H1 (cell line): ENCODE measurements at regions of chr2 and their contacts with region 1.

Region 1: GRCh38 chr2:219352448-219353023 is 20.0 kb upstream of the RESP18 start:
- DNase-seq: peak; percentile 43 to 94
- H3K4me3 ChIP-seq: no peak overlapping the region
- H3K27ac ChIP-seq: no peak overlapping the region
- H3K4me1 ChIP-seq: peaks cover 0 to 3% (median 0%) of the 10 kb centered on the region in 4 experiments; a peak in 1 of 7 replicates
- H3K27me3 ChIP-seq: peaks cover 4 to 13% (median 8%) of the 10 kb centered on the region in 4 experiments
- CTCF ChIP-seq: peak; percentile 59 to 85 (median 81)
- EP300 ChIP-seq: no peak
- POLR2A ChIP-seq: no peak
- RAD21 ChIP-seq: peak; percentile 74 to 77

Region 2: DNA sequence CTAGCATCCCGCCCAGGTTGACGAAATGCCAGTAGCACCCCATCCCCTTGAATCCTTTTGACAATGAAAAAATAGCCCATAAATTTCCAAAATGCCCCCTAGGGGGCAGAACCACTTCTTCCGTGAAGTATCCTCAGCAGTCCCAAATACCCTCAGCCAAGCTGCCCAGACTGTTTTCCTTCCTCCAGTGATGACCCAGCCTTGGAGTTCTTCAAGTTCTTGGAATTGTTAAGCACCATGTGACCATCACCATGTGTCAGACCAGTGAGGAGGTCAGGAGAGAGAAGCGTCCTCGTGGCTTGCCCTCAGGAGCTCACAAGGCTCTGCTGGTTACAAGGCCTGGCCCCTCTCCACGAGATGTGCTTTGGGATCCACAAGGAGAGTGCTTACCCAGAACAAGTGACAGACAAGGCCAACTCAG is 181.3 kb before region 1 on chr2:
- CTCF ChIA-PET with region 1: interaction called, 12 read pairs
- POLR2A ChIA-PET with region 1: no interaction called
- DNase-seq: peak in 1 of 2 experiments; percentile 58
- H3K4me3 ChIP-seq: no peak overlapping the region
- H3K27ac ChIP-seq: no peak overlapping the region
- H3K4me1 ChIP-seq: peaks cover 0 to 7% (median 2%) of the 10 kb centered on the region in 4 experiments; a peak in 2 of 7 replicates
- H3K27me3 ChIP-seq: no peaks in the 10 kb centered on the region
- CTCF ChIP-seq: peak; percentile 19 to 62 (median 58)
- EP300 ChIP-seq: no peak
- POLR2A ChIP-seq: no peak
- RAD21 ChIP-seq: peak; percentile 47 to 57

Region 3: DNA sequence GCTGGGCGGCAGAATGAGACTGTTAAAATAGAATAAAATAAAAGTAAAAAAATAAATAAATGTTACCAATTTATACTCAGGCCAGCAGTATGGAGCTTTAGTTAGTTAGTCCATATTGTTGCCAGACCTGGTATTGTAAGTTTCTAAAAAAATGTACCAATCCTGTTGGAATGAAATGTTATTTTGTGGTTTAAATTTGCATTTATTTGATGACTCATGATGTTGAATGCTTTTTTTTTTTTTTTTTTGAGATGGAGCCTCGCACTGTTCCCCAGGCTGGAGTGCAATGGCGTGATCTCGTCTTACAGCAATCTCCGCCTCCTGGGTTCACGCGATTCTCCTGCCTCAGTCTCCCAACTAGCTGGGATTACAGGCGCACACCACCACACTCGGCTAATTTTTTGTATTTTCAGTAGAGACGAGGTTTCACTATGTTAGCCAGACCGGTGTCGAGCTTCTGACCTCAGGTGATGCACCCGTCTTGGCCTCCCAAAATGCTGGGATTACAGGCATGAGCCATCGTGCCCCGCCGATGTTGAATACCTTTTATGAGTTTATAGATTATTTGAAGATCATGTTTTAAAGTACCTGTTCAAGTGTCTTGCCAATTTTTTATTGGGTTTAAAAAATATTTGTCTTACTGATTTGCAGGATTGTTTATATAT is 37.6 kb before region 1 on chr2:
- CTCF ChIA-PET with region 1: interaction called, 17 read pairs
- POLR2A ChIA-PET with region 1: no interaction called
- DNase-seq: no peak
- H3K4me3 ChIP-seq: no peak overlapping the region
- H3K27ac ChIP-seq: no peak overlapping the region
- H3K4me1 ChIP-seq: peaks cover 0 to 4% (median 0%) of the 10 kb centered on the region in 4 experiments; a peak in 2 of 7 replicates
- H3K27me3 ChIP-seq: peaks cover 0 to 4% (median 0%) of the 10 kb centered on the region in 4 experiments; a peak in 2 of 7 replicates
- CTCF ChIP-seq: no peak
- EP300 ChIP-seq: no peak
- POLR2A ChIP-seq: no peak
- RAD21 ChIP-seq: no peak

Region 4: GRCh38 chr2:219331560-219332213 is 20.8 kb before region 1 on chr2:
- CTCF ChIA-PET with region 1: interaction called, 91 read pairs
- POLR2A ChIA-PET with region 1: no interaction called
- DNase-seq: peak in 1 of 2 experiments; percentile 90
- H3K4me3 ChIP-seq: peak overlapping the region in 1 of 4 experiments; percentile 33; a peak in 1 of 8 replicates
- H3K27ac ChIP-seq: no peak overlapping the region
- H3K4me1 ChIP-seq: peaks cover 0 to 3% (median 1%) of the 10 kb centered on the region in 4 experiments; a peak in 5 of 7 replicates
- H3K27me3 ChIP-seq: peaks cover 11 to 37% (median 24%) of the 10 kb centered on the region in 4 experiments
- CTCF ChIP-seq: no peak
- EP300 ChIP-seq: no peak
- POLR2A ChIP-seq: no peak
- RAD21 ChIP-seq: no peak

Region 5: DNA sequence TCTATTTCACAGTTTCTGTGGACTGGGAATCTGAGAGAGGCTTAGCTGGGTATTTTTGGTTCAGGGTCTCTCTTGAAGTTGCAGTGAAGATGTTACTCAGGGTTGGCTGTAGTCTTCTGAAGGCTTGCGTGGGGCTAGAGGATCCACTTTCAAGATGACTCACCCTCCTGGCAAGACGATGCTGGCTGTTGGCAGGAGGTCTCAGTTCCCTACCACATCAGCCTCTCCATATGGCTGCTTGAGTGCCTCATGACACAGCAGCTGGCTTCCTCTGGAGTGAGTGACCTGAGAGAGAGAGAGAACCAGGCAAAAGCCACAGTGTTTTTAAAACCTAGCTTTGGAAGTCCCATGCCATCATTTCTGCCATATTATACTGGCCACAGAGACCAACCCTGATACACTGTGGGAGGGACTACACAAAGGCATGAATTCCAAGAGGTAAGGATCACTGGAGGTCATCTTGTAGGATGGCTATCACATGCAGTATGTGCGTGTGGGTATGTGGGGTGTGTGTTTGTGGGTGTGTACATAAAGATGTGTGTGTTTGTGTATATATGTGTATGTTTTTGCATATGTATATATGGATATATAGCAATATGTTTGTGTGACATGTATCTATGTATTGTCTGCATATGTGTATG is 10.1 kb after region 1 on chr2:
- CTCF ChIA-PET with region 1: interaction called, 44 read pairs
- POLR2A ChIA-PET with region 1: no interaction called
- DNase-seq: no peak
- H3K4me3 ChIP-seq: no peak overlapping the region
- H3K27ac ChIP-seq: no peak overlapping the region
- H3K4me1 ChIP-seq: peaks cover 0 to 9% (median 3%) of the 10 kb centered on the region in 4 experiments; a peak in 3 of 7 replicates
- H3K27me3 ChIP-seq: peaks cover 9 to 29% (median 25%) of the 10 kb centered on the region in 4 experiments
- CTCF ChIP-seq: no peak
- EP300 ChIP-seq: no peak
- POLR2A ChIP-seq: no peak
- RAD21 ChIP-seq: no peak

Region 6: GRCh38 chr2:219368690-219369195 is 16.2 kb after region 1 on chr2:
- CTCF ChIA-PET with region 1: interaction called, 44 read pairs
- POLR2A ChIA-PET with region 1: interaction called, 3 read pairs
- DNase-seq: no peak
- H3K4me3 ChIP-seq: no peak overlapping the region
- H3K27ac ChIP-seq: no peak overlapping the region
- H3K4me1 ChIP-seq: no peaks in the 10 kb centered on the region
- H3K27me3 ChIP-seq: no peaks in the 10 kb centered on the region; a peak in 1 of 7 replicates
- CTCF ChIP-seq: no peak
- EP300 ChIP-seq: no peak
- POLR2A ChIP-seq: no peak
- RAD21 ChIP-seq: no peak

Region 7: GRCh38 chr2:219418155-219418569 is 65.6 kb after region 1 on chr2 and contains the start of gene DES:
- CTCF ChIA-PET with region 1: no interaction called
- POLR2A ChIA-PET with region 1: no interaction called
- DNase-seq: no peak
- H3K4me3 ChIP-seq: peak within 1 kb of the TSS in 2 of 4 experiments; percentile 2 to 51; a peak in 3 of 8 replicates
- H3K27ac ChIP-seq: no peak within 1 kb of the TSS
- H3K4me1 ChIP-seq: peaks cover 8 to 26% (median 15%) of the 10 kb centered on the region in 4 experiments
- H3K27me3 ChIP-seq: peaks cover 15 to 36% (median 29%) of the 10 kb centered on the region in 4 experiments
- CTCF ChIP-seq: no peak
- EP300 ChIP-seq: no peak
- POLR2A ChIP-seq: no peak
- RAD21 ChIP-seq: no peak
- total RNA-seq, gene DES: 1.5 and 1.8 TPM in 2 replicates

Region 8: GRCh38 chr2:219537657-219538488 is 185.3 kb after region 1 on chr2:
- CTCF ChIA-PET with region 1: no interaction called
- POLR2A ChIA-PET with region 1: no interaction called
- DNase-seq: no peak
- H3K4me3 ChIP-seq: no peak overlapping the region
- H3K27ac ChIP-seq: no peak overlapping the region
- H3K4me1 ChIP-seq: peaks cover 5 to 25% (median 16%) of the 10 kb centered on the region in 4 experiments
- H3K27me3 ChIP-seq: no peaks in the 10 kb centered on the region; a peak in 1 of 7 replicates
- CTCF ChIP-seq: peak in 1 of 3 experiments; percentile 25; a peak in 1 of 4 replicates
- EP300 ChIP-seq: no peak
- POLR2A ChIP-seq: no peak
- RAD21 ChIP-seq: peak in 1 of 2 experiments; percentile 26; a peak in 1 of 4 replicates